A673 (cell line): ENCODE measurements at regions of chr2 and their contacts with region 1.

Region 1: DNA sequence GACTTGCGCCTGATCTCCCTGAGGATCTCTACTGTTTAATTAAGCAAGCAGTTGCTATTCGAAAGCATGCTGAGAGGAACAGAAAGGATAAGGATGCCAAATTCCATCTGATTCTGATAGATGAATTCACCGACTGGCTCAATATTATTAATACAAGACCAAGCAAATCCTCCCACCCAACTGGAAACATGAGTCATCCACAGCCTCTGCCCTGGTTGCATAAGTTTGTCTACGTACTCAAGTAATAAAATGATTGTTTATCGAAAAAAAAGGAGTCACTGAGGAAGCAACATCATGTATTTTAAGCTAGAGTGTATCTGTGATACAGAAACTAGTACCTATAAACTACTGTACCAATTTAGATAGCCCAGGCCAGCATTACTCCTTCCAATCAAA is 26.0 kb downstream of the ATAD2B start:
- DNase-seq: peak; percentile 58
- H3K4me3 ChIP-seq: no peak overlapping the region
- H3K27ac ChIP-seq: peak overlapping the region; percentile 31
- H3K4me1 ChIP-seq: peaks cover 24% of the 10 kb centered on the region
- H3K27me3 ChIP-seq: no peaks in the 10 kb centered on the region
- CTCF ChIP-seq: no peak

Region 2: GRCh38 chr2:23916727-23917405 is 15.9 kb after region 1 on chr2:
- CTCF ChIA-PET with region 1: no interaction called
- POLR2A ChIA-PET with region 1: no interaction called
- intact Hi-C with region 1: no loop called
- DNase-seq: no peak
- H3K4me3 ChIP-seq: no peak overlapping the region
- H3K27ac ChIP-seq: peak overlapping the region; percentile 36
- H3K4me1 ChIP-seq: peaks cover 15% of the 10 kb centered on the region
- H3K27me3 ChIP-seq: no peaks in the 10 kb centered on the region
- CTCF ChIP-seq: no peak

Region 3: GRCh38 chr2:24065341-24065740 is 164.4 kb after region 1 on chr2:
- CTCF ChIA-PET with region 1: no interaction called
- POLR2A ChIA-PET with region 1: interaction called, 11 read pairs
- intact Hi-C with region 1: no loop called
- DNase-seq: no peak
- H3K4me3 ChIP-seq: no peak overlapping the region
- H3K27ac ChIP-seq: no peak overlapping the region
- H3K4me1 ChIP-seq: no peaks in the 10 kb centered on the region
- H3K27me3 ChIP-seq: no peaks in the 10 kb centered on the region
- CTCF ChIP-seq: no peak

Region 4: DNA sequence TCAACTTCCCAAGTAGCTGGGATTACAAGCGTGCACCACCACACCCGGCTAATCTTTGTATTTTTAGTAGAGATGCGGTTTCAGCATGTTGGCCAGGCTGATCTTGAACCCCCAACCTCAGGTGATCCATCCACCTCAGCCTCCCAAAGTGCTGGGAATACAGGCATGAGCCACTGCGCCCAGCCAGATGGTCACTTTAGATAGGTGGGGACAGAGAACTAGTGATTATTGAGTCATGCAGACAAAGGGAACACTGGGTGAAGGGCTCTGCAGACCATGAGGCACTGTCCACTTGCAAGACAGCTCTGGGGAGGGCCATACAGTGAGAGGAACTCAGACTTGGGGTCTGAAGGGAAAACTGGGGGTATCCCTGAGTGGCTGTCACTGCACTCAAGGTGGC is 1325.9 kb after region 1 on chr2:
- CTCF ChIA-PET with region 1: interaction called, 4 read pairs
- POLR2A ChIA-PET with region 1: interaction called, 20 read pairs
- intact Hi-C with region 1: no loop called
- DNase-seq: no peak
- H3K4me3 ChIP-seq: no peak overlapping the region
- H3K27ac ChIP-seq: no peak overlapping the region
- H3K4me1 ChIP-seq: peaks cover 12% of the 10 kb centered on the region
- H3K27me3 ChIP-seq: no peaks in the 10 kb centered on the region
- CTCF ChIP-seq: no peak